Caco-2 (cell line): ENCODE measurements at regions of chrX and their contacts with region 1.

Region 1: GRCh38 chrX:47129157-47129898 is 15.2 kb downstream of the NDUFB11 start:
- DNase-seq: peak; percentile 92 to 93
- H3K4me3 ChIP-seq: peak overlapping the region; percentile 59
- H3K4me3 Mint-ChIP-seq: peak overlapping the region; percentile 84
- H3K27ac Mint-ChIP-seq: peak overlapping the region; percentile 31
- H3K4me1 ChIP-seq: no peaks in the 10 kb centered on the region
- H3K4me1 Mint-ChIP-seq: no peaks in the 10 kb centered on the region
- H3K27me3 ChIP-seq: no peaks in the 10 kb centered on the region
- H3K27me3 Mint-ChIP-seq: no peaks in the 10 kb centered on the region
- CTCF ChIP-seq: no peak

Region 2: GRCh38 chrX:47144626-47145394 is 15.5 kb after region 1 on chrX and contains the starts of genes NDUFB11 and RBM10:
- CTCF ChIA-PET with region 1: interaction called, 6 read pairs
- POLR2A ChIA-PET with region 1: interaction called, 12 read pairs
- intact Hi-C with region 1: no loop called
- DNase-seq: peak; percentile 94
- H3K4me3 ChIP-seq: peak within 1 kb of the TSS; percentile 94
- H3K4me3 Mint-ChIP-seq: peak within 1 kb of the TSS; percentile 92
- H3K27ac Mint-ChIP-seq: peak within 1 kb of the TSS; percentile 99
- H3K4me1 ChIP-seq: no peaks in the 10 kb centered on the region
- H3K4me1 Mint-ChIP-seq: peaks cover 7% of the 10 kb centered on the region
- H3K27me3 ChIP-seq: no peaks in the 10 kb centered on the region
- H3K27me3 Mint-ChIP-seq: no peaks in the 10 kb centered on the region
- CTCF ChIP-seq: peak; percentile 54 to 60
- total RNA-seq, gene NDUFB11: 120 and 129 TPM in 2 replicates
- total RNA-seq, gene RBM10: 41.0 and 41.2 TPM in 2 replicates

Region 3: GRCh38 chrX:47179221-47179920 is 50.0 kb after region 1 on chrX:
- CTCF ChIA-PET with region 1: no interaction called
- POLR2A ChIA-PET with region 1: no interaction called
- intact Hi-C with region 1: no loop called
- DNase-seq: no peak
- H3K4me3 ChIP-seq: no peak overlapping the region
- H3K4me3 Mint-ChIP-seq: no peak overlapping the region
- H3K27ac Mint-ChIP-seq: no peak overlapping the region
- H3K4me1 ChIP-seq: no peaks in the 10 kb centered on the region
- H3K4me1 Mint-ChIP-seq: no peaks in the 10 kb centered on the region
- H3K27me3 ChIP-seq: no peaks in the 10 kb centered on the region
- H3K27me3 Mint-ChIP-seq: no peaks in the 10 kb centered on the region
- CTCF ChIP-seq: no peak